ENCODE measurements at regions of chr1 and their contacts with region 1.

Region 1: DNA sequence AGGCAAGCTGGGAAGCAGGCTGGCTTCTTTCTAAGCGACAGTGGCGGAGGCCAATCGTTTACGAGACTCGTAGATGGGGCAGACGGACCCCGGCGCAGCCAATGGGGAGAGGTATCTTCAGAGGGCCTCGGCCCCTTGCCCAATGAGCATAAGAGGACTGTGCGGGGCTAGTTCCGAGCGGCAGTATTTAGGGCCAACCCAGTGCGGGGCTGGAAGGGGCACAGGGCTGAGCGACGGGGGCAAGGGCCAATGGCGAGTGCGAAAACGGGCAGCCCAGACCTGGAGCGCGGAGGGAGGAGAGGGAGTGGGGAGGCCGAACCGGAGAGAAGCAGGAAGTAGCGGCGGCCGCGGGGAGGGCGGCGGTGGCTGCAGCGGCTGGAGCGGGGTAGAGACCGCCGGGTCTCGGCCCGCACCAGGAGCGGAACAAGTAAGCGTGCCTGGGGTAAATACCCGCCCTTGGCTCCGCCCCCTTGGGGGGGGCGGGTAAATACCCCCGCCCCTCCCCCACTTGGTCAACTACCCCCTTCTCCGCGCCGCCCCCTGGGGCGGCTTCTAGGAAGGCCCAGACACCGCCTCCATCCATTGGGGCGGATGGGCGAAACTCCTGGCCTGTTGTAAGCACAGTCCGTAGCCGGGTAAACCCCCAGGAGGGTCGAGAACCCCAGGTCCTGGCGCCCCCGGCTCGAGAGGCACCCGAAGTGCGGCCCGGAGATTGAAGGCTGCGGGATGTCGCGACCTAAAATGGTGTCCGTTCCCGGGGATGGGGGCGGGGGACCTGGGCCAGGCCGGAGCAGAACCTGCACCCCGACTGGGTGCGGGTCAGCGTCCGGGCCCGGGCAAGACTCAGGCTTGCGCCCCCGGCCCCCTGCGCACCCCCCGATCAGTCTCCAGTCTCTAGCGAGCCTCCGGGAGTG is at the start of gene ZNF687:
- DNase-seq: peak; percentile 99
- ATAC-seq: peak; percentile 93
- H3K4me3 Mint-ChIP-seq: peak within 1 kb of the TSS; percentile 81
- H3K27ac Mint-ChIP-seq: peak within 1 kb of the TSS; percentile 95
- H3K4me1 Mint-ChIP-seq: peaks cover 27% of the 10 kb centered on the region
- H3K27me3 Mint-ChIP-seq: no peaks in the 10 kb centered on the region
- total RNA-seq, gene ZNF687: 27.2 to 30.1 TPM

Region 2: DNA sequence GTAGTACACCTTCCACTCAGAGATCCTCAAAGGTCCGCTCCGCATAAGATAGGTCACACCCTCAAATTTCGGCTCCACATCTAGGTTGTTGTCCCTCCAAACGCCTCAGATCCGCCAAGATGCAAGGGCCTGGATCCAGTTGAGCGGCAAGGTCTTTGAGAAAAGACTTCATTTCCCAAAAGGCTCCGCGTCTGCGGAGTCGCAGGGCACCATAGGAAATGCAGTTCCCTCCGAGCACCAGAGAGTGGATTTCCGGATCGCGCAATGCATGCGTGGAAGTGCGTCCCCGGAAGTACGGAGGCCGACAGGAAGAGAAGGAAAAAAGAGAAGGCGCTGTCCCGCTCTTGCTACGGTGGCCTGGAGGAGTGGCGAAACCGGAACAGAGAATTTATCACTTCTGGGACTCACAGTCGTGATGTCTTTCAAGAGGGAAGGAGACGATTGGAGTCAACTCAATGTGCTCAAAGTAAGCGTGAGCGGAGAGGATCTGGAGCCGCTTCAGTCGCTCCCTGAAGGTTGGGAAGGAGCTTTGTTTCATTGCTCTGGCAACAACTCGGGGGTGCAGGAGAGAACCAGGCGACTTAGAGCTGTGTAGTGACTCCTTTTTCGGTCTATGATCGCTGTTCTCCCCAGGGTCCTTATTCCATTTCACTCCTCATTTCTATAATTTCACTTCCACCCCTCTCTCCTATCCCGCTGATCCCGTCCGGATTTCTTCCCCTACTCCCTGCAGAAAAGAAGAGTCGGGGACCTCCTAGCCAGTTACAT is 116.3 kb before region 1 on chr1 and contains the starts of genes LYSMD1 and SCNM1:
- CTCF ChIA-PET with region 1: no interaction called
- POLR2A ChIA-PET with region 1: interaction called, 3 read pairs
- intact Hi-C with region 1: loop called in 1 of 2 experiments (anchors 1 kb)
- DNase-seq: peak; percentile 98
- ATAC-seq: peak; percentile 96
- H3K4me3 Mint-ChIP-seq: peak within 1 kb of the TSS; percentile 92
- H3K27ac Mint-ChIP-seq: peak within 1 kb of the TSS; percentile 98
- H3K4me1 Mint-ChIP-seq: peaks cover 48% of the 10 kb centered on the region
- H3K27me3 Mint-ChIP-seq: no peaks in the 10 kb centered on the region
- total RNA-seq, gene LYSMD1: 4.3 to 5.1 TPM
- total RNA-seq, gene SCNM1: 64.3 to 90.8 TPM

Region 3: DNA sequence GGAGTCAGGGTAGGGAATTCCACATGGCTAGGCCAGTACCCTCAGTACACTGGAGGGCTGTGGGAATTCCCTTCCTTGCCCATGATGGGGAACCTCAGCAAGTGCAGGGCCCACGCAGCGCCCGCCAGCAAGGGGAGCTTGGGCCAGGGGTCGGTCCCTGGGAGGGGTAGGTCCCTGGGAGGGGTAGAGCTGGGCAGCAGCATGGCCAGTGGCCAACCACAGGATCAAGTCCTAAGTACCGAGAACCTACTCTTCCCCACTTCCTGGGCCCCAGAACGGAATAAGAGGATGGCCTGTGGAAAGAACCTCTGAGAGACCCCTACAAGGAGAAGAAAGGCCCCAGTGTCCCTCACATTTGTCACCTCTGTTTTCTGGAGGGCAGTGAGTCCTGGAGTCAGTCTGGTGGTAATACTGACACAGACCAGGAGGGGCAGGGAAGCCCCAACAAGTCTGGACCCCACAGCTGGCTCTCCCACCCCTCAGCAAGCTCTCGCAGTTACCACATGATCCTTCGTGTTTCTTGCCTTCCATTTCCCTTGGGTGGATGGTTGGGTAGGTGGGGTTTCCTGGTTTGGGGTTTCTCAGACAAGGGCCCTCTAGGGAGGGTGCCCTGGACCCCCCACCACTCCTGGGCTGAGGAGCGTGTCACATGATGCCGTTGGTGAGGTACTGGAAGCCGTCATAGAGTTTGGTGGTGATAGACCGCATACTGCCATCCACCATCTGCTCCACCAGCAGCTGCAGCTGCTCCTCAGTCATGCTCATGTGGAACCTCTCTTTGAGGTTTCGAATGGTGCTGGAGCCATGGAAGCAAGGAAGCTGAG is 10.2 kb after region 1 on chr1:
- CTCF ChIA-PET with region 1: interaction called, 4 read pairs
- POLR2A ChIA-PET with region 1: interaction called, 8 read pairs
- intact Hi-C with region 1: loop called in 1 of 2 experiments (anchors 1 kb)
- DNase-seq: no peak
- ATAC-seq: peak; percentile 34
- H3K4me3 Mint-ChIP-seq: no peak overlapping the region
- H3K27ac Mint-ChIP-seq: peak overlapping the region; percentile 55
- H3K4me1 Mint-ChIP-seq: no peaks in the 10 kb centered on the region
- H3K27me3 Mint-ChIP-seq: no peaks in the 10 kb centered on the region

Region 4: GRCh38 chr1:151340870-151341754 is 58.9 kb after region 1 on chr1:
- CTCF ChIA-PET with region 1: interaction called, 12 read pairs
- POLR2A ChIA-PET with region 1: interaction called, 12 read pairs
- intact Hi-C with region 1: loop called (anchors 1 to 2 kb)
- DNase-seq: peak; percentile 65
- ATAC-seq: peak; percentile 91
- H3K4me3 Mint-ChIP-seq: no peak overlapping the region
- H3K27ac Mint-ChIP-seq: peak overlapping the region; percentile 39
- H3K4me1 Mint-ChIP-seq: peaks cover 24% of the 10 kb centered on the region
- H3K27me3 Mint-ChIP-seq: no peaks in the 10 kb centered on the region

Region 5: GRCh38 chr1:151459331-151460046 is 177.3 kb after region 1 on chr1 and contains the start of gene POGZ:
- CTCF ChIA-PET with region 1: no interaction called
- POLR2A ChIA-PET with region 1: no interaction called
- intact Hi-C with region 1: loop called in 1 of 2 experiments (anchors 1 kb)
- DNase-seq: peak; percentile 97
- ATAC-seq: peak; percentile 80
- H3K4me3 Mint-ChIP-seq: peak within 1 kb of the TSS; percentile 83
- H3K27ac Mint-ChIP-seq: peak within 1 kb of the TSS; percentile 94
- H3K4me1 Mint-ChIP-seq: peaks cover 24% of the 10 kb centered on the region
- H3K27me3 Mint-ChIP-seq: peaks cover 19% of the 10 kb centered on the region
- total RNA-seq, gene POGZ: 81.3 to 104 TPM

Region 6: GRCh38 chr1:151790071-151790940 is 508.1 kb after region 1 on chr1 and contains the start of gene TDRKH:
- CTCF ChIA-PET with region 1: no interaction called
- POLR2A ChIA-PET with region 1: no interaction called
- intact Hi-C with region 1: loop called in 1 of 2 experiments (anchors 1 kb)
- DNase-seq: peak; percentile 100
- ATAC-seq: peak; percentile 98
- H3K4me3 Mint-ChIP-seq: peak within 1 kb of the TSS; percentile 95
- H3K27ac Mint-ChIP-seq: peak within 1 kb of the TSS; percentile 89
- H3K4me1 Mint-ChIP-seq: peaks cover 18% of the 10 kb centered on the region
- H3K27me3 Mint-ChIP-seq: no peaks in the 10 kb centered on the region
- total RNA-seq, gene TDRKH: 18.4 to 19.9 TPM

Measured in activated CD4-positive, alpha-beta T cell treated with anti-CD3 and anti-CD28 coated beads for 36 hours (primary cell).